ENCODE measurements at regions of chr16 and their contacts with region 1.

Region 1: DNA sequence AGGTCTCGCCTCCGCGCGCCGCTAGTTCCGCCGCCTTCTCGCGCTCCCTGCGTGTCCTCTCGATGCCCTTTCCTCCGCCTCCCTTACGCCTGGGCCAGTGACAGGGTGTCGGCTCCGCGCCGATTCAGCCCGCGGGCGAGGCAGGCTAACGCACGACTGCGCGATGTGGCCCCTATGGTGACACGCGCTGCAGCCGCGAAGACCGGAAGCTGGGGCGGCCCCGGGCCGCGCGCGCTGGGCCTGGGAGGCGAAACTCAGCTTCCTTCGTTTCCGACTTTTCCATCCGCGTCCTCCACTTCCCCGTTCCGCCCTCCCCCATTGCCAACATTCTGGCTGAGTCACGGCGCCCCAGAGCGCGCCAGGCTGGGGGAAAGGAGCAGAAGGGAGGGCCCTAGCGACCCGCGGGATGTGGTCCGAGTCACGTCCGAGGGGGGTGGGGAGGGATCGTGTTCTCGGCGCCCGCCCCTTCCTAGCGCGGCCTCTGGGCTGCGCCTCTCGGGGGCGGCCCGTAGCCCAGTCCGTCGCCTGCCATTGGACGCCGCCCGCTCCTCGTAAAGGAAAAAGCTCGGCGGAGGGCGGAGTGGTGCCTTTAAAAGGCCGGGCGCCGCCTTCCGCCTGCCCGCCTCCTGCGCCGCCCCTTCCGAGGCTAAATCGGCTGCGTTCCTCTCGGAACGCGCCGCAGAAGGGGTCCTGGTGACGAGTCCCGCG is at the start of gene ALDOA:
- DNase-seq: peak; percentile 95
- H3K4me3 Mint-ChIP-seq: peak within 1 kb of the TSS; percentile 100
- H3K27ac Mint-ChIP-seq: peak within 1 kb of the TSS; percentile 99
- H3K4me1 Mint-ChIP-seq: peaks cover 30% of the 10 kb centered on the region
- H3K27me3 Mint-ChIP-seq: no peaks in the 10 kb centered on the region
- total RNA-seq, gene ALDOA: 2,017 and 2,037 TPM in 2 replicates

Region 2: DNA sequence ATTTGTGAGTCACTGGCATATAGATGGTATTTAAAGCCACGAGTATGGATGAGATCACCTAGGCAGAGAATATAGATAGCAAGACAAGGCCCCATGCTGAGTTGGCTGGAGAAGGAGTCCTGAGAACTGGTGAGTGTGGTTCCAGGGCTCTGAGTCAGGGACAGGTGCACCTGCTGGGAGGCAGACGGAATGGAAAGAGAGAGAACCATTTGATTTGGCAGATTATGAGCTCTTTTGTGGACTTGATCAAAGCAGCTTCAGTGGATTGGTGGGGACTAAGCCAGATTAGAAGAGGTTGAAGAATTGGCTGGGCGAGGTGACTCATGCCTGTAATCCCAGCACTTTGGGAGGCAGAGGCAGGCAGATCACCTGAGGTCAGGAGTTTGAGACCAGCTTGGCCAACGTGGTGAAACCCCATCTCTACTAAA is 46.6 kb before region 1 on chr16:
- intact Hi-C with region 1: no loop called
- DNase-seq: no peak
- H3K4me3 Mint-ChIP-seq: no peak overlapping the region
- H3K27ac Mint-ChIP-seq: no peak overlapping the region
- H3K4me1 Mint-ChIP-seq: peaks cover 7% of the 10 kb centered on the region
- H3K27me3 Mint-ChIP-seq: peaks cover 18% of the 10 kb centered on the region

Region 3: DNA sequence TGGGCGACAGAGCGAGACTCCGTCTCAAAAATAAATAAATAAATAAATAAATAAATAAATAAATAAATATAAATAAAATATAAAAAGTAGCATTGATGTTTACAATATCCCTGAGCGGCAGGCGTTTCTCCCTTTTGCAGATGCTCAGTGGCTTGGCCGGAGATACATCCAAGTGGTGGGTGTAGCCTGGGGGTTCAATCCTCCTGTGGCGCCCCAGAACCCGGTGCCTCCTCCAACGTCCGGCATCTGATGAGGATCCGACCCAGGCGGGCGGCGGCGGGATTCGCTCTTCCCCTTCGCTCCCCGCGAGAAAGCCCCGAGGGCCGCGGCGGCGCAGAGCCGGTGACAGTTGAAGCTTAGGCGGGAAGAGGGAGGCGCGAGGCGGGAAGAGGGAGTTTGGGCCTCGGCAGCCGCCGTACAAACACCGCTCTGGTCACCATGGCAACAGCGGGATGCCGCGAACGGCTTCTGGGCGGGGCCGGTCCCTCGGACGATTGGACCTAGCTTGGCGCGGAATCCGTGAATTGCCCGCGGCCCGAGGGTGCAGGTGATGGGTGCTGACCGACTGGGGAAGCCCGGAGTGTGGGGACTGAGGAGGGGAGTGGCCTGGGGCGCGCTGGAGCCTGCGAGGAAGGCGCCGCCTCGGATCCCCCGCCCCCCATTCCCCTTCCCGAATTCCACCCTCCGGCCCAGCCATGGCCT is 12.5 kb before region 1 on chr16:
- intact Hi-C with region 1: loop called (anchors 1 kb)
- DNase-seq: peak; percentile 91
- H3K4me3 Mint-ChIP-seq: peak overlapping the region; percentile 84
- H3K27ac Mint-ChIP-seq: peak overlapping the region; percentile 76
- H3K4me1 Mint-ChIP-seq: peaks cover 25% of the 10 kb centered on the region
- H3K27me3 Mint-ChIP-seq: no peaks in the 10 kb centered on the region

Region 4: GRCh38 chr16:30091474-30092372 is 26.4 kb after region 1 on chr16 and contains the start of gene TBX6:
- intact Hi-C with region 1: loop called (anchors 1 kb)
- DNase-seq: peak; percentile 92
- H3K4me3 Mint-ChIP-seq: peak within 1 kb of the TSS; percentile 88
- H3K27ac Mint-ChIP-seq: peak within 1 kb of the TSS; percentile 97
- H3K4me1 Mint-ChIP-seq: peaks cover 37% of the 10 kb centered on the region
- H3K27me3 Mint-ChIP-seq: no peaks in the 10 kb centered on the region
- total RNA-seq, gene TBX6: 2.7 and 2.9 TPM in 2 replicates

Region 5: DNA sequence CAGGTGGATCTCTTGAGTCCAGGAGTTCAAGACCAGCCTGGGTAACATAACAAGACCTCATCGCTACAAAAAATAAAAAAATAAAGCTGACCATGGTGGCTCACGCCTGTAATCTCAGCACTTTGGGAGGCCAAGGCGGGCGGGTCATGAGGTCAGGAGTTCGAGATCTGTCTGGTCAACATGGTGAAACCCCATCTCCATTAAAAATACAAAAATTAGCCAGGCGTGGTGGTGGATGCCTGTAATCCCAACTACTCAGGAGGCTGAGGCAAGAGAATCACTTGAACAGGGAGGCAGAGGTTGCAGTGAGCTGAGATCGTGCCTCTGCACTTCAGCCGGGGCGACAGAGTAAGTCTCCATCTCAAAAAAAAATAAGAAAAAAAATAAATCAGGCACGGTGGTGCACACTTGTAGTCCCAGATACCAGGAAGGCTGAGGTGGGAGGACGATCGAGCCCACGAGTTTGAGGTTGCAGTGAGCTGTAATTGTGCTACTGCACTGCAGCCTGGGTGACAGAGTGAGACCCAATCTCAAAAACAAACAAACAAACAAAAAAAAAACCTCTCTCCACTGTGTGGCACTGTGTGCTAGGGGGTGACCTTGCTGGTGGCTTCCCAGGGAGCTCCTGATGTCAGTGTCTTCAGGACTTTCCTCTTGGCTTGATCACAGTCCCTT is 77.5 kb after region 1 on chr16:
- intact Hi-C with region 1: no loop called
- DNase-seq: peak; percentile 17
- H3K4me3 Mint-ChIP-seq: no peak overlapping the region
- H3K27ac Mint-ChIP-seq: peak overlapping the region; percentile 29
- H3K4me1 Mint-ChIP-seq: peaks cover 20% of the 10 kb centered on the region
- H3K27me3 Mint-ChIP-seq: no peaks in the 10 kb centered on the region

Region 6: DNA sequence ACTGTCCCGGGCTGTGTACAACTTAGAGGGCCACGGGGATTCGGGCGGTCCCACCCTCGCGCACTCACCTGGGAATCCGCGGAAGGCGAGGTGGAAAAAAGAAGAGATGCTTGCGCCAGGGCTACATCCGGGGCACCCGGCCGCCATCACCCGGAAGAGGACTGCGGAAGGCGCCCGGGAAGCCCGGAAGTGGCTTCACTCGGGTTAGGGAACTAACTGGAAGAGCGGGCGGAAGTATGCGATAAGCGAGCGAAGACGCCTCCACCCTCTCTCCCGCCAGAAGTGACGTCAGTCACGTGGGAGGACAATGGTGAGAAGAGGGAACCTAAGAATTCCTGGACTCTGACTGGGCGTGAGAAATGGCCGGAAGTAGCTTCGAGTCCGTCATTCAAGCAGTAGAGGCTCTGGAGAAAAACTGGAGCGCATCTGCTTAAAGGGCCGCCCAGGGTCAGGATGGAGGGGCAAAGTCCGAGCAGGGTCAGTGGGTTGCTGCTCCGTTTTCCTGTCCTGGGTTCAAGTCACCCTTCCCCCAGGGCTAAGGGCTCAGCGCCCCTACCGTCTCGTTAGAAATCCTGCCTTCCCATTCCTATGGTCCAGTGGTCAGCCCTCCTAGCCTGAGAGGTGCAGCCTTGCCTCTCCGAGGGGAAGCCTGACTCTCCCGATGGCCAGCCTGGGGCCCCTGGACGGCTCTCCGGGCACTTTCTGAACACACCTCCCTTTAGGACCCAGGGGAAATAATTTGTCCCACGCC is 290.0 kb after region 1 on chr16 and contains the start of gene CD2BP2:
- intact Hi-C with region 1: loop called (anchors 10 kb)
- DNase-seq: peak; percentile 84
- H3K4me3 Mint-ChIP-seq: peak within 1 kb of the TSS; percentile 93
- H3K27ac Mint-ChIP-seq: peak within 1 kb of the TSS; percentile 89
- H3K4me1 Mint-ChIP-seq: peaks cover 37% of the 10 kb centered on the region
- H3K27me3 Mint-ChIP-seq: no peaks in the 10 kb centered on the region
- total RNA-seq, gene CD2BP2: 80.1 and 84.5 TPM in 2 replicates